ENCODE measurements at regions of chr17 and their contacts with region 1.

Region 1: DNA sequence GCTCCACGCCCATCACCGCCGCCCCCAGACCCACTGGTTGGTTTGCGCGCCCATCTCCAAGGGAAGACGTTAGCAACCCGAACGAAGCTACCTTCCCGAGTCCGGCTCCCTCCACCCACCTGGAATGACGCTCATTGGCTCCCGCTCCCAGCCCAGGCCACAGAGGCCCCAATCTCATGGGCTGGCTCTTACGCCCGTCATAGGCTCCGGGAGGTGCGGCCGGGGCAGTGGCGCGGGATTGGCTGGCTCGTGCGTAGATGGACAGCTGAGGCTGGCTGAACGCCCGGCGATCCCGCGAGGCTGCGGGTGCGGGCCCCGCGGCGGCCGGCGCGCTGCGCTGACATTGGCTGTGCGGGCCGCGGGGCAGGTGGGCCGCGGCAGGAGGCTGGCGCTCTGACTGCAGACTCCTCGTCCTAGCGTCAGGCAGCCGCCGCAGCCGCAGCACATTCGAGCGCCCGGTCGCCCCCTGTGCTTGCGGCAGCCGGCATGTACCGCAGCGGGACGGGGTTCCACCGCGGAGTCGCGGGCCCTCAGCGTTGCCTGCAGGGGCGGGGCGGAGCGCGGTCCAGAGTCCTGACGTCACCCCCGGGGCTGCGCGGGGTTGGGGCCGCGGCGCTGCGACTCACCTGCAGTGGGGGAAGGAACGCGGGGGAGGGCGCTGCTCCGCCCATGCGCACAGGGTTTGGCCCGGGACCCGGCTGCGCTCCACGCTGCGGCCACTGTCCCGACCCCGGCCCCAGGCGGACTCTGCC is 453 bp upstream of the MYH10 start:
- DNase-seq: peak; percentile 100
- H3K4me3 Mint-ChIP-seq: peak overlapping the region; percentile 97
- H3K27ac Mint-ChIP-seq: peak overlapping the region; percentile 92
- H3K4me1 Mint-ChIP-seq: peaks cover 16% of the 10 kb centered on the region
- H3K27me3 Mint-ChIP-seq: no peaks in the 10 kb centered on the region
- CTCF ChIP-seq: peak; percentile 18

Region 2: GRCh38 chr17:8542599-8543502 is 88.1 kb before region 1 on chr17:
- CTCF ChIA-PET with region 1: no interaction called
- POLR2A ChIA-PET with region 1: interaction called, 7 read pairs
- intact Hi-C with region 1: loop called (anchors 2 kb)
- DNase-seq: peak; percentile 88
- H3K4me3 Mint-ChIP-seq: no peak overlapping the region
- H3K27ac Mint-ChIP-seq: peak overlapping the region; percentile 59
- H3K4me1 Mint-ChIP-seq: peaks cover 10% of the 10 kb centered on the region
- H3K27me3 Mint-ChIP-seq: no peaks in the 10 kb centered on the region
- CTCF ChIP-seq: no peak

Region 3: GRCh38 chr17:8581002-8581658 is 49.8 kb before region 1 on chr17:
- CTCF ChIA-PET with region 1: interaction called, 5 read pairs
- POLR2A ChIA-PET with region 1: interaction called, 22 read pairs
- intact Hi-C with region 1: no loop called
- DNase-seq: peak; percentile 55
- H3K4me3 Mint-ChIP-seq: no peak overlapping the region
- H3K27ac Mint-ChIP-seq: peak overlapping the region; percentile 87
- H3K4me1 Mint-ChIP-seq: peaks cover 10% of the 10 kb centered on the region
- H3K27me3 Mint-ChIP-seq: no peaks in the 10 kb centered on the region
- CTCF ChIP-seq: no peak

Region 4: GRCh38 chr17:8681170-8681949 is 50.4 kb after region 1 on chr17:
- CTCF ChIA-PET with region 1: no interaction called
- POLR2A ChIA-PET with region 1: no interaction called
- intact Hi-C with region 1: no loop called
- DNase-seq: no peak
- H3K4me3 Mint-ChIP-seq: no peak overlapping the region
- H3K27ac Mint-ChIP-seq: no peak overlapping the region
- H3K4me1 Mint-ChIP-seq: no peaks in the 10 kb centered on the region
- H3K27me3 Mint-ChIP-seq: peaks cover 23% of the 10 kb centered on the region
- CTCF ChIP-seq: no peak

Region 5: DNA sequence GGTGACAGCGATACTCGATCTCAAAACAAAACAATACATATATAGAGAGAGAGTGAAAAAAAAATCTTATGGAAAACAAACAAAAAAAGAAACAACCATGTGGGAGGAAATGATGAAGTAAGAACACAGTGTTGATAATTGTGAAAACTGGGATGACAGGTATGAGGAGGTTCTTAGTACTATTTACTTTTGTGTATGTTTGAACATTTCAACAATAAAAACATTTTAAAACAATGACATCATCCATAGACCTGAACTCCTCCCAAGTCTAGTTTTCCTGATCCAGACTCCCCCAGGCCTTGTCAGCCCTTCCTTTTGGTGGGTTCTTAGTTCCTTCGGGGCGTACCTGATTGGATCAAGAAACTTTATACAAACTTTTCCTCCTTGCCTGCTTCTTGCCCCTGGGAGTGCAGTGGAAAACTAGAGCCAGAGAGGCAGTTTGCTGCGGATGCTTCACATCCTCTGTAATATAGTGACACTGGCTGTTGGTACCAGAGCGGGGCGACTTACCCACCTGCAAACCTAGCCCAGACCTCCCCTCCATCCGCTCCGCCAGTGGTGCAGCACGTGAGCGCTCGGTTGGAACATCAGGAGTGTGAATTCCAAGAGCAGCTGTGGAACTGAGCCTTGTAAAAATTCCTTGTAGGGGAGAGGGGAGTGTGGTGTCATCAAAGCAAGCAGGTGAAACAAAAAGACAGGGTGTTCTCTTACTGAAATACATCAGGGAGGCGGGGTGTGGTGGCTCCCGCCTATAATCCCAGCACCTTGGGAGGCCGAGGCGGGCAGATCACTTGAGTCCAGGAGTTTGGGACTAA is 62.1 kb after region 1 on chr17:
- CTCF ChIA-PET with region 1: no interaction called
- POLR2A ChIA-PET with region 1: no interaction called
- intact Hi-C with region 1: no loop called
- DNase-seq: no peak
- H3K4me3 Mint-ChIP-seq: no peak overlapping the region
- H3K27ac Mint-ChIP-seq: no peak overlapping the region
- H3K4me1 Mint-ChIP-seq: peaks cover under 1% of the 10 kb centered on the region
- H3K27me3 Mint-ChIP-seq: peaks cover 18% of the 10 kb centered on the region
- CTCF ChIP-seq: no peak

Region 6: GRCh38 chr17:8727065-8727511 is 96.1 kb after region 1 on chr17:
- CTCF ChIA-PET with region 1: interaction called, 3 read pairs
- POLR2A ChIA-PET with region 1: interaction called, 6 read pairs
- intact Hi-C with region 1: loop called (anchors 10 kb)
- DNase-seq: peak; percentile 87
- H3K4me3 Mint-ChIP-seq: no peak overlapping the region
- H3K27ac Mint-ChIP-seq: peak overlapping the region; percentile 71
- H3K4me1 Mint-ChIP-seq: peaks cover 13% of the 10 kb centered on the region
- H3K27me3 Mint-ChIP-seq: no peaks in the 10 kb centered on the region
- CTCF ChIP-seq: no peak